Common myeloid progenitor, CD34-positive (primary cell): ENCODE measurements at regions of chr4 and their contacts with region 1.

Region 1: DNA sequence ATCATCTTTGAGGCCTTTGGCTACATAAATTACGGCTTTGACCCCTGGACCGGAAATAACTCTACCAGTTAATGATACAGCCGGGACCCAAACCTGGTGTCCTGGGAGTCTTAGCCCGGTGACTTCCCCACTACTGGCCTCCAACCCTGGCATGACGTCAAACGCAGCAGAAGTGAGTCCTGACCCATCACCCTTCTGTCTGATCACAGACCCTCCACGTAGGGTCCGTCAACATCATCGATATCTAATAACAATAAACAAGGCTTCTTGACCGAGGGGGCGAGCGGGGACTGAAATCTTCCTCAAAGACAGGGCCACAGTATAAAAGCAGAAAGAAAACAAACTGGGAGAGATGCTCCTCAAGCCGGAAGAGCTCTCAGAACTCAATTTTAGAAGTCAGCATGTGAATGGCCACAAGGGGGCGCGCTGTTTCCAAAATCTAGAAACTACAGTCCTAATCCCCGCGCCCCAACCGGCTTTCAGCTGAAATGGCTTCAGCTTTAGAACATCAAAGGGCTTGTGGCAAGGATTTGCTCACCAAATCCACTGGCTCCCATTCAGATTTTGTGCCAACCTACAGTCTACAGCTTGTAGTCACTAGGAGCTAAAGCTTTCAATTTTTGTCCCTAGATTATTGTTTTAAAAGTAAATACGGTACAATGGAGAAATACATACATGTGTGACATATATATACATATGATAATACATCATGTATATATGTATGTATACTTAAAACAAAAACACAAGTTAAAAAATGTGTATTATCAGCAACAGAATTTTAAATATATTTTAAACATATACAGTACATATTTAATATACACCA is 46.4 kb upstream of the ENPP6 start:
- DNase-seq: peak; percentile 94 to 98 (median 96)
- H3K4me3 ChIP-seq: peak overlapping the region in 1 of 7 experiments; percentile 12
- H3K27ac ChIP-seq: no peak overlapping the region
- H3K4me1 ChIP-seq: peaks cover 0 to 37% (median 6%) of the 10 kb centered on the region in 4 experiments
- H3K27me3 ChIP-seq: no peaks in the 10 kb centered on the region

Region 2: GRCh38 chr4:184215709-184216328 is 48.3 kb before region 1 on chr4:
- CTCF ChIA-PET with region 1: no interaction called
- POLR2A ChIA-PET with region 1: no interaction called
- DNase-seq: no peak
- H3K4me3 ChIP-seq: no peak overlapping the region
- H3K27ac ChIP-seq: no peak overlapping the region
- H3K4me1 ChIP-seq: no peaks in the 10 kb centered on the region
- H3K27me3 ChIP-seq: peaks cover 0 to 10% (median 0%) of the 10 kb centered on the region in 5 experiments

Region 3: DNA sequence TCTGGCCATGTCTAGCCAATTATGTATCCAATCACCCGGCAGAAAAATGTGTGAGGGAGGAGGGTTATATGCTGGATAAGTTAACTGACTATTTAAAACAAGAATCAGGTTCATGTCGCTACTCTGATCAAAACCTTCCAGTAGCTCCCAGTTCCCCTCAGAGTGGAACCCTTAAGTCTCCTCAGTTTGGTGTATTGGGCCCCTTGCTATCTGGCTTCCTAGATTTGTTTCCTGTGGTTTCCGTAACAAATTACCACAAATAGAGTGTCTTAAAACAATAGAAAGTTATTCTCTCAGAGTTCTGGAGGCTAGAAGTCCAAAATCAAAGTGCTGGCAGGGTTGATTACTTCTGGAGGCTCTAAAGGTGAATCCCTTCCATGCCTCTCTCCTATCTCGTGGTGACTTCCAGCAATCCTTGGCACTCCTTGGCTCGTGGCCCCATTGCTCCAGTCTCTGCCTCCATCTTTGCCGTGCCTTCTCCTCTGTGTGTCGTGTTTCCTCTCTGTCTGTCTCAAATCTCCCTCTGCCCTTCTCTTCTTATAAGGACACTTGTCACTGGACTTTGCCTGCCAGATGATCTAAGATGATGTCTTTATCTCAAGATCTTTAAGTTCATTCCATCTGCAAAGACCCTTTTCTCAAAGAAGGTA is 35.9 kb before region 1 on chr4:
- CTCF ChIA-PET with region 1: no interaction called
- POLR2A ChIA-PET with region 1: no interaction called
- DNase-seq: peak; percentile 28 to 68 (median 56)
- H3K4me3 ChIP-seq: no peak overlapping the region
- H3K27ac ChIP-seq: no peak overlapping the region
- H3K4me1 ChIP-seq: peaks cover 4 to 32% (median 31%) of the 10 kb centered on the region in 4 experiments
- H3K27me3 ChIP-seq: no peaks in the 10 kb centered on the region

Region 4: DNA sequence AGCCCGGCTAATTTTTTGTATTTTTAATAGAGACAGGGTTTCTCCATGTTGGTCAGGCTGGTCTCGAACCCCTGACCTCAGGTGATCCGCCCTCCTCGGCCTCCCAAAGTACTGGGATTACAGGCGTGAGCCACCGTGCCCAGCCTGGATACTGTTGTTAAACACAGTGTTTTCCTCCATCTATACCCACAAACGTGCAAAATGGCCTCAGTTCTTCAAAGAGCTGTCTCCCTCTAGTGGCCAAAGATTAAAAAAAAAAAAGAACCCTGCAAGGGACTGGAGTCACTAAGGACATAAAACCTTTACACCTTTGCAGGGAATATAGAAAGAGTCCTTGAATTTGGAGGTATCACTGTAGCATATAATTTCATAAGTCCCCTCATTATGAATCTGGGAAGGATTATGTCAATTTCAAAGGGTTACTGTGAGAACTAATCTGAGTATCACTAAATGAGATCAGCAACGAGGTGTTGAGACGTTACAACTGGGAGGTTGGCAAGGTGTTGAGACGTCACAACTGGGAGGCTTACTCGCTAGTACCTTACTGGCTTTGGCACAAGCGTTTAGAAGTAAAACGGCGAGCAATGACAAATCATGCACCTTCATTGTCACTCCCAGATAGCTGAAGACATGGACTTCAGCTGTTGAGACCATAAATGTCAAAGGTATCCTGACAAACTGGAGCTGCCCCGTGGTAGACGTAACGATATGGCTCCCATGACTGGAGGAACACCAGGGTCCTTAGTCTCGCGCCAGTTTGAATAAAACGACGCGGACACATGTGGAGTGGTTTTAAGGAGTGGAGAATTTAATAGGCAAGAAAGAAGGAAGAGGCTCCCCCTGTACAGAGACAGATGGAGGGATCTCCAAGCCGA is 13.1 kb before region 1 on chr4:
- CTCF ChIA-PET with region 1: interaction called, 11 read pairs
- POLR2A ChIA-PET with region 1: no interaction called
- DNase-seq: peak; percentile 59 to 78 (median 72)
- H3K4me3 ChIP-seq: no peak overlapping the region
- H3K27ac ChIP-seq: no peak overlapping the region
- H3K4me1 ChIP-seq: no peaks in the 10 kb centered on the region
- H3K27me3 ChIP-seq: no peaks in the 10 kb centered on the region

Region 5: GRCh38 chr4:184287697-184288255 is 23.7 kb after region 1 on chr4:
- CTCF ChIA-PET with region 1: interaction called, 11 read pairs
- POLR2A ChIA-PET with region 1: no interaction called
- DNase-seq: peak in 1 of 3 donors; percentile 28
- H3K4me3 ChIP-seq: peak overlapping the region in 1 of 7 experiments; percentile 19
- H3K27ac ChIP-seq: no peak overlapping the region
- H3K4me1 ChIP-seq: peaks cover 4 to 17% (median 10%) of the 10 kb centered on the region in 4 experiments
- H3K27me3 ChIP-seq: no peaks in the 10 kb centered on the region

Region 6: DNA sequence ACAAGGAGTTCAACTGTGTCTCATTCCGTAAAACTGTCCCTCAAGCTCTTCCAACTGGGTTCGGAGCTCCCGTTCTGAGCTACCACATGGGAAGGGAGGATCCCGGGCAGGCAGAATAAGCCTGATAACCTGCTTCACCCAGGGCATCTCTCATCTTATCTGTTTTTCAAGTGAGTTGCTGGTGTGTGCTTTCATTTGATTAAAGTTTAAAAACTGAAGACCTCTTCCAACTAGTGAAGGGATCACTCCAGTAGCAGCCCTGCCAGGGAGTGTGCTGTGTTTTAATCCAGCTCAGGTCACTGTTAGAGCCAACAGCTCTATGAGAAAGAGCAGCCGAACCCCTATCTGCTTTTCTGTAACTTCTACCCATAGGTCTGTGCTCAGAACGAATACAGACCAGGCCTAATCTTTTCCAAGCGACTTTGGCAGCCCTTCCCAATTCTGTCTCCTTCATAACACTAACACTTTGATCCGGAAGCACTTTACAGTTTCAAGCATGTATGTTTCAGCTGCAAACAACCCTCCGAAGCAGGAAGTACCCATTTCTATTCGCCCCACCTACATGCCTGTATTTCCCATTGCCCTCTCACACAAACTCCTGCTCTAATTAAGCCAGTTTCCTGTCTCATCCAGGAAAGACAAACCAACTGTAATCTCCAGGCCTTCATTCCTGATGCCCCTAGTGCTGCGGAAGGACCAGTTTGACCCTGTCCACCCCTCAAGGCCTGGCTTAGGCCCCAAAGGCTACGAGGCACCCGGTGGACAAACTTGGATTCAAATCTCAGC is 149.3 kb after region 1 on chr4:
- CTCF ChIA-PET with region 1: interaction called, 13 read pairs
- POLR2A ChIA-PET with region 1: no interaction called
- DNase-seq: peak in 1 of 3 donors; percentile 18
- H3K4me3 ChIP-seq: no peak overlapping the region
- H3K27ac ChIP-seq: no peak overlapping the region
- H3K4me1 ChIP-seq: peaks cover 18 to 62% (median 53%) of the 10 kb centered on the region in 4 experiments
- H3K27me3 ChIP-seq: no peaks in the 10 kb centered on the region

Region 7: DNA sequence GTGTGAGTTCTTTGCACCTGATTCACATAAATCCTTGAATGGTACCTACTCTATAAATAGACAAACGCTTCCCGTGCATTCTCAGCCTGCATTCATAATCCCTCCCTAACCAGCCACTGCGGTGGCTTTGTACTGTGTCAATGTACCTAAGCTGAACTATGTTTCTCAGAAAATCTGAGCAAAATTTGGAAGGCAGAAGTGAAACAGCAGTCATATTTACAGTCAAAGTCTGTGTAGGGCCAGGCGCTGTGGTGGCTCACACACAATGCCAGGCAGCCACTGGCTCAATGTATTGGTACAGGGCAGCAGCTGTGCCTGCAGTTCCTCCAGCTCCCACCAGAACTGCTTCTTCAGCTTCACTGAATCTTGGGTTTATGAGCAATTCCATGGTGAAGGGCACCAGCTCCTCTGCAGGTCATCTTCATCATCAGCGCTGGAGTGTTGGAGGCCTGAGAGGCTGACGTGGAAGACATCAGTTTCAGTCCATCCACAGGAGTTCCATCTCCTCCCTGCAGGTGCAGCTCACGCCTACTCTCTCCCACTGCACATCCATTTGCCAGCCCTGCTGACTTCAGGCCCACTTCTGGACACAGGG is 242.5 kb after region 1 on chr4:
- CTCF ChIA-PET with region 1: interaction called, 14 read pairs
- POLR2A ChIA-PET with region 1: no interaction called
- DNase-seq: peak; percentile 52 to 75 (median 68)
- H3K4me3 ChIP-seq: no peak overlapping the region
- H3K27ac ChIP-seq: no peak overlapping the region
- H3K4me1 ChIP-seq: peaks cover 2 to 21% (median 17%) of the 10 kb centered on the region in 4 experiments
- H3K27me3 ChIP-seq: no peaks in the 10 kb centered on the region

Region 8: DNA sequence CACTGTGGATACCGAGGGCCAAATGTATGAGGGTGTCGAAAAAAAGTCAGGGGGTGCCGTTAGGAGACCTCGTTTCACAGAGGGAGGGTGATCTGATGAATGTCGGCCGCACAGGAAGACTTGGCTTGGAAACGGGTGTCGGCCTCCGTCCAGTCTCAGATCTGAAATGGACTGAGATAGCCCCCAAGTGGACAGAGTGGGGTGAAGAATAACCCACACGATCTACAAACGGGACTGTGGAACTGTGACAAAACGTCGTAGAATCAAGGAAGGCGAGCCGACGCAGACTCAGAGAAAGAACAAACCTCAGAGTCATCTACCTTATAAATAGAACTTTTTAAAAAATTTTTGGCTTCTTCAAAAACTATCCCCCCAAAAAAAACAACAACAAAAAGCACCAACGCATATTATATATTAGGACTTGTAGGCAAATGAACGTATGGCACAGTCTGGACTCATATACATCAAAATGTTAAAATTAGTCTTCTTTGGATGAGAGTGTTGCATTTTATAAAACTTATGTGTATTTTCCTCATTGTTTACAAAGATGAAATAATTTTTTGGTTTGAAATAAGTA is 274.0 kb after region 1 on chr4:
- CTCF ChIA-PET with region 1: interaction called, 28 read pairs
- POLR2A ChIA-PET with region 1: interaction called, 3 read pairs
- DNase-seq: peak; percentile 90
- H3K4me3 ChIP-seq: peak overlapping the region; percentile 18 to 99 (median 89)
- H3K27ac ChIP-seq: peak overlapping the region; percentile 90 to 98
- H3K4me1 ChIP-seq: peaks cover 21 to 48% (median 35%) of the 10 kb centered on the region in 4 experiments
- H3K27me3 ChIP-seq: no peaks in the 10 kb centered on the region

Region 9: DNA sequence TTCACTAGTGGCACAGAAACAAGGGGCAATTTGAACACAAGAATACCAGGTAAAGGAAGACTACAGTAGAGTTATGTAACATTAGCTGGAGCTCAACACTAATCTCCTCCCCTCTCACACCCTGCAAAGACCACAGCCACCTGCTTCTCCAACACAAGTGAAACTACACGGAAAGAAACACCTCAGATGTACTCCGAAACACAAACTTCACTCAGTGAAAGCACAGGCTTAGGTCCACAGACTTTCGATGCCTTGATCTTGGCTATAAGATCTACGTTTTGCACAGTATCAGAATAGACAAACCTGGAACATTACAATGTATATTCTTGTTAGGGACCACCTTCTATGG is 554.1 kb after region 1 on chr4:
- CTCF ChIA-PET with region 1: interaction called, 11 read pairs
- POLR2A ChIA-PET with region 1: no interaction called
- DNase-seq: no peak
- H3K4me3 ChIP-seq: peak overlapping the region in 1 of 7 experiments; percentile 19
- H3K27ac ChIP-seq: no peak overlapping the region
- H3K4me1 ChIP-seq: peaks cover 17 to 50% (median 36%) of the 10 kb centered on the region in 4 experiments
- H3K27me3 ChIP-seq: no peaks in the 10 kb centered on the region